OCI-LY7 (cell line): ENCODE measurements at regions of chr4 and their contacts with region 1.

Region 1: DNA sequence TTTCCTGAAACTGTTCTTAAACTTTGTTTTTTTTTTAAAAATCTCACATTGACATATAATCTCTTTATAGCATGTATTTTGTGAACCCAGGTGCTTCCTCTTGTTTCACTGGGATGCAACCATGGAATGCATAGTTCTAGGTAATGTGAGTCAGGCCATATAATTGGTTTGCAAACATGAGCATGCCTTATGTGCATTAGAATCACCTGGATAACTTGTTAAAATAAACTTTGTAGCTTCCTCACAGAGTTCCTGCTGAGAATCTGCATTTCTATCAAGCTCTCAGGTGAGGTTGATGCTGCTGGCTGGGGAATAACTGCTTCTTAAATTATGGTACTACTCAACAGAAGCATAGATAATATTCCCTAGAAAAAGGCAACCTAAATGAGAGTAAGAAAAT is 940.3 kb upstream of the LCORL start:
- DNase-seq: no peak
- H3K4me3 ChIP-seq: no peak overlapping the region
- H3K27ac ChIP-seq: no peak overlapping the region
- H3K4me1 ChIP-seq: no peaks in the 10 kb centered on the region
- CTCF ChIP-seq: no peak

Region 2: GRCh38 chr4:18973296-18973695 is 11.4 kb after region 1 on chr4:
- CTCF ChIA-PET with region 1: no interaction called
- POLR2A ChIA-PET with region 1: interaction called, 12 read pairs
- intact Hi-C with region 1: no loop called
- DNase-seq: no peak
- H3K4me3 ChIP-seq: no peak overlapping the region
- H3K27ac ChIP-seq: peak overlapping the region; percentile 47
- H3K4me1 ChIP-seq: peaks cover 19% of the 10 kb centered on the region
- CTCF ChIP-seq: no peak

Region 3: DNA sequence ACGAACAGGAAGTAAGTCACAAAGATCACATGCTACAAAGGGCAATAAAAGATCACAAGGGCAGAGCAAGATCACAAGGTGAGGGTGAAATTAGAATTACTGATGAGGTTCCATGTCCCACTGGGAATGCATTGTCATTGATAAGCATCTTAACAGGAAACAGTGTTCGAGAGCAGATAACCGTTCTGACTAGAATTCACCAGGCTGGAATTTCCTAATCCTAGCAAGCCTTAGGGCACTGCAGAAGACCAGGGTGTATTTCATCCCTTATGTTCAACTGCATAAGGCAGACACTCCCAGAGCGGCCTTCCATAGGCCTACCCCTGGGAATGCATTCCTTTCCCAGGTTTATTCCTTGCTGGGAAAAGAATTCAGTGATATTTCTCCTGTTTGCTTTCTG is 40.3 kb after region 1 on chr4:
- CTCF ChIA-PET with region 1: no interaction called
- POLR2A ChIA-PET with region 1: no interaction called
- intact Hi-C with region 1: no loop called
- DNase-seq: no peak
- H3K4me3 ChIP-seq: no peak overlapping the region
- H3K27ac ChIP-seq: no peak overlapping the region
- H3K4me1 ChIP-seq: no peaks in the 10 kb centered on the region
- CTCF ChIP-seq: no peak